ENCODE measurements at regions of chr9 and their contacts with region 1.

Region 1: GRCh38 chr9:79135681-79136415 is 435.9 kb upstream of the TLE4 start:
- DNase-seq: no peak
- H3K4me3 ChIP-seq: no peak overlapping the region
- H3K27ac ChIP-seq: no peak overlapping the region
- H3K4me1 ChIP-seq: no peaks in the 10 kb centered on the region
- H3K27me3 ChIP-seq: no peaks in the 10 kb centered on the region
- CTCF ChIP-seq: no peak

Region 2: GRCh38 chr9:78115073-78115472 is 1020.8 kb before region 1 on chr9:
- CTCF ChIA-PET with region 1: interaction called, 23 read pairs
- POLR2A ChIA-PET with region 1: no interaction called
- intact Hi-C with region 1: no loop called
- DNase-seq: peak in 1 of 2 experiments; percentile 31
- H3K4me3 ChIP-seq: no peak overlapping the region
- H3K27ac ChIP-seq: no peak overlapping the region
- H3K4me1 ChIP-seq: peaks cover 13% of the 10 kb centered on the region
- H3K27me3 ChIP-seq: no peaks in the 10 kb centered on the region
- CTCF ChIP-seq: peak; percentile 52

Measured in PC-9 (cell line).